ENCODE measurements at regions of chr12 and their contacts with region 1.

Region 1: GRCh38 chr12:104958009-104958945 is at the start of gene SLC41A2:
- DNase-seq: peak; percentile 81
- ATAC-seq: peak; percentile 91
- H3K4me3 ChIP-seq: peak within 1 kb of the TSS; percentile 81
- H3K27ac ChIP-seq: peak within 1 kb of the TSS; percentile 68
- H3K4me1 ChIP-seq: peaks cover 10% of the 10 kb centered on the region
- H3K27me3 ChIP-seq: no peaks in the 10 kb centered on the region
- CTCF ChIP-seq: peak; percentile 22 to 40 (median 32); a peak in 2 of 6 replicates
- EP300 ChIP-seq: 0 out of 4 replicates have a peak, but pooled peaks of 1 of the 2 experiments have one; percentile 26
- POLR2A ChIP-seq: peak; percentile 89
- RAD21 ChIP-seq: peak; percentile 16
- polyA plus RNA-seq, gene SLC41A2: 3.5 to 9.2 TPM

Region 2: GRCh38 chr12:104930388-104931326 is 27.6 kb before region 1 on chr12:
- CTCF ChIA-PET with region 1: interaction called, 10 read pairs
- POLR2A ChIA-PET with region 1: interaction called, 9 read pairs
- RAD21 ChIA-PET with region 1: interaction called, 12 read pairs
- SMC1A ChIA-PET with region 1: interaction called, 24 read pairs
- in situ Hi-C with region 1: no loop called
- intact Hi-C with region 1: no loop called
- DNase-seq: peak; percentile 90
- ATAC-seq: peak; percentile 97
- H3K4me3 ChIP-seq: peak overlapping the region; percentile 48; the same call in 1 of the 2 replicates
- H3K27ac ChIP-seq: peak overlapping the region; percentile 93
- H3K4me1 ChIP-seq: peaks cover 49% of the 10 kb centered on the region
- H3K27me3 ChIP-seq: no peaks in the 10 kb centered on the region
- CTCF ChIP-seq: no peak
- EP300 ChIP-seq: peak; percentile 65 to 97
- POLR2A ChIP-seq: no peak
- RAD21 ChIP-seq: 0 out of 2 replicates have a peak, but pooled peaks have one; percentile 3